Sigmoid colon (tissue), 7 donors: ENCODE measurements at regions of chr22 and their contacts with region 1.

Region 1: GRCh38 chr22:30245985-30246901 is at the start of gene LIF:
- DNase-seq: no peak
- H3K4me3 ChIP-seq: peak within 1 kb of the TSS; percentile 7 to 50 (median 44)
- H3K27ac ChIP-seq: peak within 1 kb of the TSS in 2 of 4 donors; percentile 9 to 29
- H3K4me1 ChIP-seq: peaks cover 0 to 23% (median 18%) of the 10 kb centered on the region in 4 donors
- H3K27me3 ChIP-seq: peaks cover 5 to 54% (median 24%) of the 10 kb centered on the region in 3 donors
- CTCF ChIP-seq: no peak
- EP300 ChIP-seq: no peak
- POLR2A ChIP-seq: no peak
- total RNA-seq, gene LIF: 0.28 to 5.8 (median 0.34) TPM

Region 2: GRCh38 chr22:30196141-30196879 is 49.9 kb before region 1 on chr22:
- intact Hi-C with region 1: loop called (anchors 5 kb)
- DNase-seq: peak; percentile 92
- H3K4me3 ChIP-seq: peak overlapping the region in 1 of 4 donors; percentile 2
- H3K27ac ChIP-seq: peak overlapping the region; percentile 61 to 73 (median 70)
- H3K4me1 ChIP-seq: peaks cover 0 to 23% (median 19%) of the 10 kb centered on the region in 4 donors
- H3K27me3 ChIP-seq: no peaks in the 10 kb centered on the region
- CTCF ChIP-seq: no peak
- EP300 ChIP-seq: peak in 1 of 4 donors; percentile 14
- POLR2A ChIP-seq: no peak

Region 3: DNA sequence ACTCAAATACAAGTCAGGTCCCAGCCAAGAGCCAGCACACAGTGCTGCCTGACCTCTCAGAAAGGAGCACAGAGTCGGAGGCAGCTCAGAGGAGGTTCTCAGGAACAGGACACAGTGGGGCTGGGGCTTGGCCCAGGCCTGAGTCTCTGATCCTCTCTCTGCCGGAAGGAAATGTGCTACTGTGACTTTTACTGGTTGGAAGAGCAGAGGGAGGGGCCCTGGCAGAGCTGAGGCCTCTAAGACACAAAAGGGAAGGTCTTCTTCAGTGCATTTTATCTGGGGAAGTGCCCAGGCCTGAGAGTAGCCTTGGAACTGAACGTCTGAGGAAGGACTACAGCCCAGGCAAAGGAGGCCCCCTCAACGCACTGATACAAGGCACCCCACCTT is 59.3 kb after region 1 on chr22:
- intact Hi-C with region 1: no loop called
- DNase-seq: peak; percentile 87
- H3K4me3 ChIP-seq: no peak overlapping the region
- H3K27ac ChIP-seq: peak overlapping the region; percentile 82 to 89 (median 88)
- H3K4me1 ChIP-seq: peaks cover 4 to 100% (median 93%) of the 10 kb centered on the region in 4 donors
- H3K27me3 ChIP-seq: no peaks in the 10 kb centered on the region
- CTCF ChIP-seq: no peak
- EP300 ChIP-seq: no peak
- POLR2A ChIP-seq: no peak

Region 4: GRCh38 chr22:30542811-30543188 is 296.6 kb after region 1 on chr22:
- intact Hi-C with region 1: no loop called
- DNase-seq: no peak
- H3K4me3 ChIP-seq: peak overlapping the region in 2 of 4 donors; percentile 42 to 48
- H3K27ac ChIP-seq: no peak overlapping the region
- H3K4me1 ChIP-seq: peaks cover 0 to 12% (median 10%) of the 10 kb centered on the region in 4 donors
- H3K27me3 ChIP-seq: peaks cover 3 to 47% (median 27%) of the 10 kb centered on the region in 3 donors
- CTCF ChIP-seq: no peak
- EP300 ChIP-seq: no peak
- POLR2A ChIP-seq: no peak